Panc1 (cell line): ENCODE measurements at regions of chr10 and their contacts with region 1.

Region 1: GRCh38 chr10:116385994-116386809 is 41.4 kb upstream of the PNLIPRP3 start:
- DNase-seq: peak; percentile 27
- ATAC-seq: 0 out of 2 replicates have a peak, but pooled peaks have one; percentile 42
- H3K4me3 ChIP-seq: no peak overlapping the region
- H3K27ac ChIP-seq: no peak overlapping the region
- H3K4me1 ChIP-seq: no peaks in the 10 kb centered on the region
- H3K27me3 ChIP-seq: peaks cover 20% of the 10 kb centered on the region
- CTCF ChIP-seq: peak; percentile 68; the same call in 1 of the 2 replicates

Region 2: DNA sequence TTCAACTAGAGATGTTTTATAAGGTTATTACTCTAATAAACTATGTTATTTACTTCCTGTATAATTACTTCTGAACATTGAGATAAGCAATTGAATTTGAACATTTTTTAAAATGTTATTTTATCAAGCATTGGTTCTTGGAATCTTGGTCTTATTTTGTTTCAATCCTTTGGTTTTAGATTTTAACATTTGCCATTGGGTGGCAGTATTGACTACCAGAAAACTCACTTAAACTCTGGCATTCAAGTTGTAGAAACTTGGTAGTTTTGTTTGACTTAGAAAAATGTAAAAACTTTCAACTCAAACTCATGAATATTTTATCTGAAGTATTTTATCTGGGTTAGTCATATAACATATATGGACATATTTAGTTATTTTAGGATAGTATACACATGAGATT is 1244.9 kb before region 1 on chr10:
- CTCF ChIA-PET with region 1: no interaction called
- POLR2A ChIA-PET with region 1: no interaction called
- in situ Hi-C with region 1: no loop called
- intact Hi-C with region 1: loop called (anchors 10 kb)
- DNase-seq: no peak
- ATAC-seq: no peak
- H3K4me3 ChIP-seq: no peak overlapping the region
- H3K27ac ChIP-seq: no peak overlapping the region
- H3K4me1 ChIP-seq: no peaks in the 10 kb centered on the region
- H3K27me3 ChIP-seq: no peaks in the 10 kb centered on the region
- CTCF ChIP-seq: peak; percentile 60; the same call in 1 of the 2 replicates

Region 3: DNA sequence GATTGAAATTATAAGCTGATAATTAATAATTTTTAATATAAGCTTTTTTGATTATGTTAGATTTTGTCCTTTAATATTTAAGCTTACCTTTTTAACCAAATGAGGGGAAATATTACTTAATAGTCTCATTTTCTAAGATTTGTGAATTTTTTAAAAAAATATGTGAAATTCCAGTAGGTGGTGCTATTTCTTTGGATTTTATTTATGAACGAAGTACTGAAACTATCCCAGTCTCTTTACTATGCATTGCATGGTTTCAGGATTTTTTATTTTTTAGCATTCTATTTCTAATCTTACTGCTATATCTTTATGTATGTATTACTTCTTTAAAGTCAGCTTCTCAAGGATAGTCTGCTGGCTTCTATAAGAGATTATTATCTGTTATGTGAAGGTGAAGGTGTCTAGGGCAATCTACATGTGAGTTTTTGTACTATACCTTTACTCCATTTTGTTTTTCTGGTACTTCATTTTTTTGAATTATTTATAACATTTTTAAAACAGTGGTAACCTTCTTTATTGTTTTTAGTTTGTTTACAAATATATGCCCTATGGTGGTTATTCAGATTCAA is 1214.7 kb before region 1 on chr10:
- CTCF ChIA-PET with region 1: no interaction called
- POLR2A ChIA-PET with region 1: no interaction called
- in situ Hi-C with region 1: no loop called
- intact Hi-C with region 1: loop called (anchors 10 kb)
- DNase-seq: no peak
- ATAC-seq: no peak; the same call in 1 of the 2 replicates
- H3K4me3 ChIP-seq: no peak overlapping the region
- H3K27ac ChIP-seq: no peak overlapping the region
- H3K4me1 ChIP-seq: no peaks in the 10 kb centered on the region
- H3K27me3 ChIP-seq: no peaks in the 10 kb centered on the region
- CTCF ChIP-seq: peak; percentile 48; the same call in 1 of the 2 replicates

Region 4: DNA sequence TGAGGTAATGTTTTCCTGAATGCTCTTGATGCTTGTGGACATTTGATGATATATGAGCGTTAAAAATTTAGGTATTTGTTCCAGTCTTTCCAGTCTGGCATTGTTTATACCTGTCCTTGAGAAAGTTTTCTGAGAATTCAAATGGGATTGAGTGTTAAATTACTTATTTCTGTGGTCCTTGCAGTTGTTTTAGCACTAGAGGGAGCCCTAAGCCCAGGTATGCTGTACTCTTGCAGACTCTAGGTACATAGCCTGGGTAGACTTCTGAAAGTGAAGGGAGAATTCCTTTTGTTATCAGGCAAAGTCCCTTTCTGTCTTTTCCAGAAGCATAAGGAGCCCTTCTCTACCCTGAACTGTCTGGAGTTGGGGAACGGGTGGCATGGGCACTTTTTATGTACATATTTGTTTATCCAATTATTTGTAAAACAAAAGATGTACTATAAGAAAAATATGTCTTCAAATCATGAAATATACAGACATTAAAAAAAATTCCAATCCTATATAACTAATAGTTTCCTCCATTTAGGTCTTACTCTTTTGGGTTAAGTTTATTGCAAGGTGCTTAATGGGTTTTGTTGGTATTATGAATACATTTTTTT is 1030.9 kb before region 1 on chr10:
- CTCF ChIA-PET with region 1: no interaction called
- POLR2A ChIA-PET with region 1: no interaction called
- in situ Hi-C with region 1: no loop called
- intact Hi-C with region 1: loop called (anchors 1 kb)
- DNase-seq: peak; percentile 47
- ATAC-seq: peak; percentile 94
- H3K4me3 ChIP-seq: no peak overlapping the region
- H3K27ac ChIP-seq: no peak overlapping the region
- H3K4me1 ChIP-seq: no peaks in the 10 kb centered on the region
- H3K27me3 ChIP-seq: no peaks in the 10 kb centered on the region
- CTCF ChIP-seq: peak; percentile 86

Region 5: GRCh38 chr10:115432188-115432775 is 953.9 kb before region 1 on chr10:
- CTCF ChIA-PET with region 1: no interaction called
- POLR2A ChIA-PET with region 1: no interaction called
- in situ Hi-C with region 1: no loop called
- intact Hi-C with region 1: loop called (anchors 5 kb)
- DNase-seq: no peak
- ATAC-seq: 0 out of 2 replicates have a peak, but pooled peaks have one; percentile 65
- H3K4me3 ChIP-seq: no peak overlapping the region
- H3K27ac ChIP-seq: no peak overlapping the region
- H3K4me1 ChIP-seq: no peaks in the 10 kb centered on the region
- H3K27me3 ChIP-seq: no peaks in the 10 kb centered on the region
- CTCF ChIP-seq: peak; percentile 68; the same call in 1 of the 2 replicates

Region 6: GRCh38 chr10:115706026-115706781 is 680.0 kb before region 1 on chr10:
- CTCF ChIA-PET with region 1: no interaction called
- POLR2A ChIA-PET with region 1: no interaction called
- in situ Hi-C with region 1: no loop called
- intact Hi-C with region 1: loop called (anchors 5 kb)
- DNase-seq: peak; percentile 8
- ATAC-seq: no peak; the same call in 1 of the 2 replicates
- H3K4me3 ChIP-seq: no peak overlapping the region
- H3K27ac ChIP-seq: no peak overlapping the region
- H3K4me1 ChIP-seq: no peaks in the 10 kb centered on the region
- H3K27me3 ChIP-seq: no peaks in the 10 kb centered on the region
- CTCF ChIP-seq: peak; percentile 68; the same call in 1 of the 2 replicates

Region 7: GRCh38 chr10:115801992-115802391 is 584.2 kb before region 1 on chr10:
- CTCF ChIA-PET with region 1: no interaction called
- POLR2A ChIA-PET with region 1: no interaction called
- in situ Hi-C with region 1: no loop called
- intact Hi-C with region 1: loop called (anchors 5 kb)
- DNase-seq: no peak
- ATAC-seq: no peak
- H3K4me3 ChIP-seq: no peak overlapping the region
- H3K27ac ChIP-seq: no peak overlapping the region
- H3K4me1 ChIP-seq: no peaks in the 10 kb centered on the region
- H3K27me3 ChIP-seq: no peaks in the 10 kb centered on the region
- CTCF ChIP-seq: no peak

Region 8: DNA sequence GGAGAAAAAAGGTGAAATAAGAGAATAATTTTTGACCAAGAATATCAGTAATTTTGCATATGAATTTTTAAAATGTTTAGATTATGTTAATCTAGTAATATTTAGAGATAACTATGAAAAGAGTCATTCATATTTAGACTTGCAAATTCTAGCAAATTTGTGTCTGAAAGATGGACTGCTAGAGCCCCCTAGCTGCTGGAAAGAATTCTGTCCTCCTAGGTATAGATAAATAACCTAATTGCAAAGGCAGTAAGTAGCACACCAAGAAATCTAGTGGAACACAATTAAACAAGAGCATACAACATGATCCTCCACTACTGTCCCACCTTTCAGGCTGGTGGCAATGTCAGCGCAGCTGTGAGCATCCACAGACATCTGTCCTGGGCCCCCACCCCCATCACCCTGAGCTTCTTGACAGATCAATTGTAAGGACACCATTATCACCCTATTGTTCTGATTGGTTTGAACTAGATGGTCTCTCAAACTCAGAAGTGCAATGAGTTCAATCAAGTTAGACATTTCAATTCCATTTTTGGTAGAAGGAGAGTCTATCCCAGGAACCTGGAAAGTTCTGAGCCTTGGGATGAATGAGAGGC is 98.2 kb before region 1 on chr10:
- CTCF ChIA-PET with region 1: no interaction called
- POLR2A ChIA-PET with region 1: no interaction called
- in situ Hi-C with region 1: no loop called
- intact Hi-C with region 1: no loop called
- DNase-seq: peak; percentile 13
- ATAC-seq: peak; percentile 72; the same call in 1 of the 2 replicates
- H3K4me3 ChIP-seq: no peak overlapping the region
- H3K27ac ChIP-seq: no peak overlapping the region
- H3K4me1 ChIP-seq: no peaks in the 10 kb centered on the region
- H3K27me3 ChIP-seq: no peaks in the 10 kb centered on the region; the same call in 1 of the 2 replicates
- CTCF ChIP-seq: peak; percentile 84

Region 9: DNA sequence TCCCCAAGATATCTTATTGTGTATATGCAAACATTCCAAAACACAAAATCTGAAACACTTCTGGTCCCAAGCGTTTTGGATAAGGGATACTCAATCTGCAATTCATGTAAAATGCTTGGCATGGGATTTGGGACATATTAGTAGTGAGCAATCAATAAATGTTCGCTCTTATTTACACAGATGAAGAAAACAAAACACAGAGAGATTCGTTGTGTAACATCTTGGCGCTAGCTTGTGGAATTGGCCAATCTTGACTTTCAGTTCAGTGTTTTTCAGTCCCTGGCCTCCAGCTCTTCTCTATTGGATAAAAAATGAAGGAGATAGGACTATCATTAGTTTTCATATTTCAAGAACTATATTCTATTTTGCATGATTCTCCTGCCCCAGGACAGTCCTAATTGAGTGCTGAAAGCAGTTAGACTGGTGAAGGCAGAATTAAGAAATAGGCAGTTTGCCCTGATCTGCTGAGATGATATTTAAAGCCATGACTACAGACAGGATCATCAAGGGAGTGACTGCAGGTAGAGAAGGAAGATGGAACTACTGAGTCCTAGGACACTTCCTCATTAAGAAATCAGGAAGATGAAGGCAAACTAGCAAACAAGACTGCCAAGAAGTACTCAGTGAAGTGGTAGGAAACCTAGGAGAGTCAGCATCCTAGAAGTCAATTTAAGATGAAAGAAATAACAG is 43.2 kb after region 1 on chr10:
- CTCF ChIA-PET with region 1: no interaction called
- POLR2A ChIA-PET with region 1: no interaction called
- in situ Hi-C with region 1: no loop called
- intact Hi-C with region 1: no loop called
- DNase-seq: no peak
- ATAC-seq: no peak
- H3K4me3 ChIP-seq: no peak overlapping the region
- H3K27ac ChIP-seq: no peak overlapping the region
- H3K4me1 ChIP-seq: no peaks in the 10 kb centered on the region
- H3K27me3 ChIP-seq: peaks cover 3% of the 10 kb centered on the region
- CTCF ChIP-seq: no peak